Right cardiac atrium (tissue), 5 donors: ENCODE measurements at regions of chr12 and their contacts with region 1.

Region 1: GRCh38 chr12:4276524-4277204 is 3.1 kb downstream of the CCND2 start:
- DNase-seq: peak; percentile 87 to 90 (median 90)
- ATAC-seq: peak; percentile 51 to 53
- H3K4me3 ChIP-seq: peak overlapping the region; percentile 88
- H3K27ac ChIP-seq: peak overlapping the region; percentile 51
- H3K4me1 ChIP-seq: peaks cover 13% of the 10 kb centered on the region
- H3K27me3 ChIP-seq: no peaks in the 10 kb centered on the region

Region 2: DNA sequence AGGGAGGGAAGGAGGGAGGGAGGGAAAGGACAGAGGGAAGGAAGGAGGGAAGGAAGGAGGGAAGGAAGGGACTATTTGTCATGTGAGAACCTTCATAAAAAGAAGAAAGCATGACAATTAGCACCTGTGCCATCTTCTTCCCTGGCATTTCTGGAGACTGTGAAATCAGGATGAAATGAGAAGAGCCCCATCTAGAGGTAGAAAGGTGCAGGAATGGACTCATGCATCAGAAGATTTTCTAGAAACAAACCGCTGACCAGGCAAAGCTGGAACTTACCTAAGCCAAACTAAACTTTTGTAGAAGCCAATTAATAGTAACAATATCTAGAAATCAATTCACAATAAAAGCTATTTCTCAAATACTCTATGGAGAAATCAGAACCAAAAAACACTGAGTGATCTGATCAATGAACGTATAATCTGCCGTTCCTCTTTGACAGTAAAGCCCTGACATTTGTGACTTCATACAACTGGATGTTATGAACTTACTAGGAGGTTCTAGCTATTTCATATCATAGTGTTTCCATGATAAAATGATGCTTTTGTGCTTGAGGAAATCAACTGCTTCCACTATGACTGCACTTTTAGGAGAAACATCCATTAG is 499.4 kb before region 1 on chr12:
- intact Hi-C with region 1: no loop called
- DNase-seq: no peak
- ATAC-seq: peak; percentile 63 to 76
- H3K4me3 ChIP-seq: no peak overlapping the region
- H3K27ac ChIP-seq: no peak overlapping the region
- H3K4me1 ChIP-seq: no peaks in the 10 kb centered on the region
- H3K27me3 ChIP-seq: no peaks in the 10 kb centered on the region

Region 3: GRCh38 chr12:3885277-3886094 is 391.2 kb before region 1 on chr12:
- intact Hi-C with region 1: loop called in 3 of 4 experiments (anchors 5 to 10 kb)
- DNase-seq: no peak
- ATAC-seq: peak; percentile 31 to 45
- H3K4me3 ChIP-seq: peak overlapping the region; percentile 48
- H3K27ac ChIP-seq: peak overlapping the region; percentile 48
- H3K4me1 ChIP-seq: no peaks in the 10 kb centered on the region
- H3K27me3 ChIP-seq: no peaks in the 10 kb centered on the region

Region 4: GRCh38 chr12:3929875-3930615 is 346.6 kb before region 1 on chr12:
- intact Hi-C with region 1: no loop called
- DNase-seq: no peak
- ATAC-seq: no peak
- H3K4me3 ChIP-seq: no peak overlapping the region
- H3K27ac ChIP-seq: no peak overlapping the region
- H3K4me1 ChIP-seq: no peaks in the 10 kb centered on the region
- H3K27me3 ChIP-seq: peaks cover 2% of the 10 kb centered on the region

Region 5: DNA sequence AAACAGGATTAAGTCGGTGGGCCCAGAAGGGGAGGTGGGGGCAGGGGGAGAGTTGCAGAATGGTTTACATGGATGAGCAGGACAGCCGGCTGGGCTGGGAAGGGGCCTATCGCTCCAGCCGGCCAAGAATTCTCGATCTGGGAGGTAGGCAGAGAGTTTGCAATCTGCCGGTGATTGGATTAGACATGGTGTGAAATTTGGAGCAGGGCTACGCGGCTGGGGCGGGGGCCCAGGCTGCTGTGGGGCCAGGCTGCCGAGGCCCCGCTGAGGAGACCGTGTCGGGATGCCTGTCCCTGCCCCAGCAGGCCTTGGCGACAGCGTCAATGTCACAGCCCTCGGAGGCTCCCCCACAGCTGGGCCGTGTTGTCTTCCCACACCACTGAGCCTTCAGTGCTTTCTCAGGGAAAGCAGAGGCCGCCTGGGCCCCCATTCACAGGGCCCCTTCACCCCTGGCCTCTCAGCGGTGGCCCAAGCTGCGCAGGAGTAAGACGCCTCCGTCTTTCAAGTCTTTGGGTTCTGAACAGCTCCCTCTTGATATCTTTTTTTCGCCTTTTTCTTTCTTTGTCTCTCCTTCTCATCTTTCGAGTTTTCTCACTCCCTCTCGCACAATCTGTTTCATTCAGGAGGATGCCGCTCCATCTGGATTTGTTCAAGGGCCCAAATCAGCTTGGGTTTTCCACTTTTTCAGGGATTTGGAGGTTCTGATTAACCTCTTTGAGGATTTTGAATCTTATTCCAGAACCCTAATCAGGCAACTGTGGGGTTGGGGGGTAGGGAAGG is 286.0 kb before region 1 on chr12:
- intact Hi-C with region 1: loop called (anchors 5 to 10 kb)
- DNase-seq: no peak
- ATAC-seq: peak in 1 of 2 donors; percentile 26
- H3K4me3 ChIP-seq: no peak overlapping the region
- H3K27ac ChIP-seq: no peak overlapping the region
- H3K4me1 ChIP-seq: no peaks in the 10 kb centered on the region
- H3K27me3 ChIP-seq: no peaks in the 10 kb centered on the region

Region 6: GRCh38 chr12:4030929-4031702 is 245.5 kb before region 1 on chr12:
- intact Hi-C with region 1: loop called in 1 of 4 experiments (anchors 10 kb)
- DNase-seq: peak; percentile 90 to 93 (median 93)
- ATAC-seq: peak; percentile 99
- H3K4me3 ChIP-seq: peak overlapping the region; percentile 41
- H3K27ac ChIP-seq: peak overlapping the region; percentile 18
- H3K4me1 ChIP-seq: no peaks in the 10 kb centered on the region
- H3K27me3 ChIP-seq: no peaks in the 10 kb centered on the region

Region 7: GRCh38 chr12:4112734-4113325 is 163.8 kb before region 1 on chr12:
- intact Hi-C with region 1: loop called in 3 of 4 experiments (anchors 5 to 10 kb)
- DNase-seq: no peak
- ATAC-seq: no peak
- H3K4me3 ChIP-seq: no peak overlapping the region
- H3K27ac ChIP-seq: no peak overlapping the region
- H3K4me1 ChIP-seq: peaks cover 8% of the 10 kb centered on the region
- H3K27me3 ChIP-seq: no peaks in the 10 kb centered on the region